ENCODE measurements at regions of chr21 and their contacts with region 1.

Region 1: DNA sequence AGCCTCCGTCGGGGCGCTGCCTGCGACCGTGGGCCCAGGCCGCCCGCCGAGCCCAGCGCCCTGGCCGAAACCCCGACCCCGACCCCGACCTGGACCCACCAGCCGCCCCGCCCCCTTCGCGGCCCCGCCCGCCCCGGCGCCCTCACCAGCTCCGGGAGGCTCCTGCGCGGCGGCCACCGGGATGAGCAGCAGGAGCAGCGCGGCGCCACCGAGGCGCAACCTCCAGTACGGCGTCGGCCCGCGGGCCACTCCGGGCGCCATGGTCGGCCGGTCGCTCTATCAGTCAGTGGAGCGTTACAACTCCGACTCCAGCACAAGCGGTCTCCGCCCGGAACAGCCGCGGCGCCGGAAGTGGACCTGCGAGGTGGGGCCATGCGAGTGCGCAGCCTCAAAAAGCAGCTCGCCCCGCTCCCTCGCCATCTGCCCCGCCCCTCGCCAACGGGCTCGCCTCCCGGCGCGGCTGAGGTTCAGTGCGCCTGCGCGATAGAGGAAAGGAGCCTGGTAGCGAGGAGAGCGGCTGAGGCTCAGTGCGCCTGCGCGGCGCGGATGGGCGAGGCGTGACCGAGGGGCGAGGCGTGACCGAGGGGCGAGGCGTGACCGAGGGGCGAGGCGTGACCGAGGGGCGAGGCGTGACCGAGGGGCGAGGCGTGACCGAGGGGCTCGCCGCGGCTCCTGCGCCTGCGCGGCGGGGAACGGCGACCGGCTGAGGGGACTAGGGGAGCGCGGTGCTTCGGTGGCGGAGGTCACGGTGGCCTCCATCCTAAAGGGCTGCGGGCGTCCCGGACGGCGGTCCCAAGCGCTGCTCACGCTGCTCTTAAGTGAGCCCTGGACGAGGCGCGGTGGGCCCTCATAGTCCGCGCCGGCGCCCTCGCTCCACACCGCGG is at the start of gene PTTG1IP:
- DNase-seq: peak; percentile 96 to 100
- H3K4me3 ChIP-seq: peak within 1 kb of the TSS; percentile 88 to 99
- H3K27ac ChIP-seq: peak within 1 kb of the TSS; percentile 95 to 98
- H3K4me1 ChIP-seq: peaks cover 18 to 36% of the 10 kb centered on the region in 2 donors
- H3K27me3 ChIP-seq: no peaks in the 10 kb centered on the region
- CTCF ChIP-seq: no peak
- total RNA-seq, gene PTTG1IP: 468 TPM

Region 2: DNA sequence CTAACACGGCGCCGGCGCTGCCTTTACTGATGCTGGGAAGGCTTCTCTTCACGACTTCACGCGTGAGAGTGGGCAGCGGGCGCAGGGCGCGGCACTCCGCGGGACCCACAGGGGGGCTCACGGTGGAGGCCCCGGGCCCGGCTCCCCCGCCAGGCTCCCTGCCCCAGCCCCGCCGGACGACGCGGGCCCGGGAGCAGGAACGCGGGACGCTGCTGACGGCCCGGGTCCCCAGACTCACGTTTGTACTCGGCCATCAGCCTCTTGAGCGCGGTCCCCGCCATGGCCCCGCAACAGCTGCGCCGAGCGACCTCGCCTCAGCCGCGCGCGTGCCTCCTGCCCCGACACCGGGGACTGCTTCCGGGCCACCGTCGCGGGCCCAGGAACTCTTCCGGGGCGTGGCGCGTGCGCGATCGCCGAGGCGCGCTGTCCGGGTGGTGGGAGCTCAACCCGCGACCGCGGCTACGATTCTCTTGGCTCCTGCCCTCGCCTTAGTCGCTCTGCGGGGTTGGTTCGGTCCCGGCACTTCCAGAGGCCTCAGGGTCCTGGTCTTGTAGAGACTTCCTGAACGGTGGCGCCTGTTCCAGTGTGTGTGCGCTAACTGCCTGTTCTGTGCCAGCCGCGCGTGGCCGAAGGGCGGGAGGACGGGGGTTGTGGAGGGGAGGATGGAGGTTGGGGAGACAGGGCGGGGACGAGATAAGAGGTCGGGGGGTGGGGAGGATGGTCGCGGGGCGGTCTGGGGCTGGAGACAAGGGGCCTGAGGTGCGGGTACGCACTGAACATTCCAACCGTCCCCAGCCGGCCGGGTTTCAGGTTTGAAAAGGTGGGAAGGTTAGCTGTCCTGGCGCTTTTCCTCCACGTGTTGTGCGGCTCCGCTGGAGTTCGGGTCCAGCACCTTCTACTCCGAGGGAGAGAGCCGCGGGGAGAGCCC is 71.9 kb before region 1 on chr21 and contains the start of gene UBE2G2:
- intact Hi-C with region 1: loop called (anchors 2 kb)
- DNase-seq: peak in 1 of 2 donors; percentile 86
- H3K4me3 ChIP-seq: peak within 1 kb of the TSS; percentile 85 to 91
- H3K27ac ChIP-seq: peak within 1 kb of the TSS; percentile 66
- H3K4me1 ChIP-seq: peaks cover 7 to 14% of the 10 kb centered on the region in 2 donors
- H3K27me3 ChIP-seq: no peaks in the 10 kb centered on the region
- CTCF ChIP-seq: no peak
- total RNA-seq, gene UBE2G2: 58.1 TPM

Region 3: DNA sequence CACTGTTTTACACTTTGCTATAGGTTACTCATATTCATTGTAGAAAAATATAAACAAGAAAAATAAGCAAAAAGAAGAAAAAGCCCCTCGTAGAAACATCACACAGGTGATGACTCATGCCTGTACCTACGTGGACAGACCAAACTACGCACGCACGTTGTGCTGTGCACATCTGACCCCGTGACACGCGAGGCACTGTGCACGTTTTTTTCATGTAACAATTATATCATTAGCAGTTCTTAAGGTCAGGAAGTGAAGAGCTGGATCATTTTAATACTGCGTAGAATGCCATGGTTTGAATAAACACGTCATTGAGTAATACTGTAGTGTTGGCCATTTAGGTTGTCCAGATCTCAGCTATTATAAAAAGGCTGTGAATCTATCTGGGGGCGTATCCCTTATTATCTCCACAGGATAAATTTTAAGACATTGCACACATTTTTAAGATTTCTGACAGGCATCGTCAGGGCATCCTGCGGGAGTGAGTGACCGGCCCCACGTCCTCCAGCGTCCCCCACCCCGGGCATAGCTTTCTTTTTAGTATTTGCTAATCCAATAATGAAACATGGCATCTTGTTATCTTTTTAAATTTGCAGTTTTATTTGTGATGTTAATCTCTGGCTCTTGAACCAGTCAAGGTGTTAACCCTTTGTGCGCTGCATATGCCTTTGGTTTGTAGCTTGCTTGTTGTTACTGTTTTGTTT is 177.3 kb after region 1 on chr21:
- intact Hi-C with region 1: loop called (anchors 10 kb)
- DNase-seq: peak in 1 of 2 donors; percentile 88
- H3K4me3 ChIP-seq: no peak overlapping the region
- H3K27ac ChIP-seq: peak overlapping the region; percentile 98 to 99
- H3K4me1 ChIP-seq: peaks cover 21 to 55% of the 10 kb centered on the region in 2 donors
- H3K27me3 ChIP-seq: no peaks in the 10 kb centered on the region
- CTCF ChIP-seq: no peak

Region 4: DNA sequence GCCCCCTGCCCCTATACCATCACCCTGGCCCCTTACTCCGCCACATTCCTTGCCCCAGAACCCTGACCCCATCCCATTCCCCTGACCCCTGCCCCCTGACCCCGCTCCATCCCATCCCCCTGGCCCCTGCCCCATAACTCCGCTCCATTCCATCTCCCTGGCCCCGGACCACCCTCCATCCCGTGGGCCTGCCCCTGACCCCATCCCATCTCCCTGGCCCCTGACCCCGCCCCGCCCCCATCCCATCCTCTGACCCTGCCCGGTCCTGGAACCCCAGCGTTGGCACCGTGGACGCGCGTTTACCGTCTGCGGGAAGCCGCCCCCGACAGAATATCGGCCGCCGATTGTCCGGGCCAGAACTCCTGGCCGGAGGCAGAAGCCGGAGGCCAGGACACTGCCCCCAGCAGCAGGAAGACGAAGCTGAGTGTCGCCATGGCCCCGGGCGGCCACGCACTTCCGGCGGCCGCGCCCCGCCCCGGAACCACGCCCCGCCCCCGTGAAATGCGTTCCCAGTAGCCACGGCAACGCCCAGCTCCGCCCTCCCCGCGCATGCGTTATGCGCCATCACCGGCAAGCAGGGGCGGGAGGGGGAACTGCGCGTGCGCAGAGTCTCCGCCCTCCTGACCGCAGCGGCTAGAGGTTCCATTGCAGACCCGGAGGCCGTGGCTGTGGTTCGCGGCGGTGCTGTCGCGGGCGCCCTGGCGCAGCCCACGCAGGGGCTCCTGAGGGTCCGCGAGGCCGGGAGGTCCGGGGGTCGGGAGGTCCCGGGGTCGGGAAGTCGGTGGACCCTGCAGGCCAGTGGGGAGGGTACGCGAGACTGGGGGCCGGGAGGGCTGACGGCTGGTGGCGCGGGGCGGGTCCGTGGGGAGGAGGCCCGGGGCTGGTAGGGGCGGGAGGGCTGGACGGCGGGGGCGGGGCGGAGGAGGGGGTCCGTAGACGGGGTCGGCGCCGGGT is 414.1 kb after region 1 on chr21 and contains the start of gene POFUT2:
- intact Hi-C with region 1: loop called (anchors 5 kb)
- DNase-seq: peak; percentile 83 to 98
- H3K4me3 ChIP-seq: peak within 1 kb of the TSS; percentile 61 to 98
- H3K27ac ChIP-seq: peak within 1 kb of the TSS; percentile 83 to 88
- H3K4me1 ChIP-seq: peaks cover 11 to 20% of the 10 kb centered on the region in 2 donors
- H3K27me3 ChIP-seq: no peaks in the 10 kb centered on the region
- CTCF ChIP-seq: peak in 1 of 3 experiments; percentile 5
- total RNA-seq, gene POFUT2: 39.4 TPM

Region 5: DNA sequence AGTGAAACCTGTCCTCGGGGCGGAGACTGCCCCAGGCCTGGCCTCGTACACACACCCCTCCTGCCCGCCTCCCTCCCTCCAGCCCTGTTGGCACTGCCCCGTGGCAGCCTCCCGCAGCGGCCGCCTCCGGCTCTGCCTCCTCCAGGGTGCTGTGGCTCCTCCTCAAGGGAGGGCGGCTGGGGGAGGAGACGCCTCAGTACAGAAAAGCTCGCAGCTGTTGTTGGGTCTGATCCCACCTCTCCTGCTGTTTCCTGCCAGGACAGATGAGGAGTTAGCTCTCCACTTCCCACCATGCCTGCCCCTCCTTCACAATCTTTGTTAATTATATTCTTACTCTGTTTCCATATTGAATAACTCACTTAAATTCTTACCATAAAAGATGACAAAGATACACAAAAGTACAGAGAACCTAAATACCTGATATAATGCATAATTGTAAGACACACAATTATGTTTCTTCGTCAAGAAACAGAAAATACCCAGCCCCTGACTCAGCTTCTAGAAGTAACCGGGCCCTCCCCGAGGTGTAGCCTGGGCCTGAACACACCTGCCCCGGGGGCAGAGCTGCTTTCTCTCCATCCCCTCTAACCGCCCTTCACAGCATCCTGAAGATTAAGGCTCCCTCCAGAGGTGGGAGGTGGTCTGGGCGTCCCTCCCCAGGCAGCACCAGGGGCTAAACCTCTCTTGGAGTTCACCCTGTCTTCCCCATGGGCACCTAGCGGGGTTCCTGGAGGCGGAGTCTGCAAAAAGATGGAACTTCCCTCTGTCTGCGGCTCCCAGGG is 1077.3 kb after region 1 on chr21:
- intact Hi-C with region 1: loop called (anchors 5 kb)
- DNase-seq: peak in 1 of 2 donors; percentile 90
- H3K4me3 ChIP-seq: peak overlapping the region in 1 of 2 donors; percentile 23
- H3K27ac ChIP-seq: peak overlapping the region; percentile 66 to 72
- H3K4me1 ChIP-seq: peaks cover 14 to 43% of the 10 kb centered on the region in 2 donors
- H3K27me3 ChIP-seq: no peaks in the 10 kb centered on the region
- CTCF ChIP-seq: no peak